Mammary epithelial cell (primary cell): ENCODE measurements at regions of chr3 and their contacts with region 1.

Region 1: GRCh38 chr3:125662675-125663074 is 67.4 kb upstream of the OSBPL11 start:
- DNase-seq: no peak
- H3K4me3 ChIP-seq: no peak overlapping the region
- H3K27ac ChIP-seq: no peak overlapping the region
- H3K4me1 ChIP-seq: no peaks in the 10 kb centered on the region
- H3K27me3 ChIP-seq: no peaks in the 10 kb centered on the region
- CTCF ChIP-seq: no peak

Region 2: GRCh38 chr3:125611908-125612307 is 50.8 kb before region 1 on chr3:
- CTCF ChIA-PET with region 1: no interaction called
- dilution Hi-C with region 1: loop called (anchors 5 kb)
- in situ Hi-C with region 1: no loop called
- intact Hi-C with region 1: no loop called
- DNase-seq: no peak
- H3K4me3 ChIP-seq: no peak overlapping the region
- H3K27ac ChIP-seq: no peak overlapping the region
- H3K4me1 ChIP-seq: no peaks in the 10 kb centered on the region
- H3K27me3 ChIP-seq: no peaks in the 10 kb centered on the region
- CTCF ChIP-seq: no peak